Heart right ventricle (tissue), 16 donors: ENCODE measurements at regions of chr16 and their contacts with region 1.

Region 1: GRCh38 chr16:58392215-58393137 is at the start of gene GINS3:
- DNase-seq: peak; percentile 85 to 95
- ATAC-seq: peak; percentile 97 to 99 (median 98)
- H3K4me3 ChIP-seq: peak within 1 kb of the TSS; percentile 61 to 100 (median 78)
- H3K27ac ChIP-seq: peak within 1 kb of the TSS; percentile 44 to 89 (median 84)
- H3K4me1 ChIP-seq: peaks cover 0 to 20% (median 12%) of the 10 kb centered on the region in 9 donors
- H3K27me3 ChIP-seq: peaks cover 0 to 4% (median 0%) of the 10 kb centered on the region in 7 donors
- CTCF ChIP-seq: peak in 2 of 9 donors; percentile 7 to 10
- total RNA-seq, gene GINS3: 4.0 to 8.8 (median 5.5) TPM

Region 2: DNA sequence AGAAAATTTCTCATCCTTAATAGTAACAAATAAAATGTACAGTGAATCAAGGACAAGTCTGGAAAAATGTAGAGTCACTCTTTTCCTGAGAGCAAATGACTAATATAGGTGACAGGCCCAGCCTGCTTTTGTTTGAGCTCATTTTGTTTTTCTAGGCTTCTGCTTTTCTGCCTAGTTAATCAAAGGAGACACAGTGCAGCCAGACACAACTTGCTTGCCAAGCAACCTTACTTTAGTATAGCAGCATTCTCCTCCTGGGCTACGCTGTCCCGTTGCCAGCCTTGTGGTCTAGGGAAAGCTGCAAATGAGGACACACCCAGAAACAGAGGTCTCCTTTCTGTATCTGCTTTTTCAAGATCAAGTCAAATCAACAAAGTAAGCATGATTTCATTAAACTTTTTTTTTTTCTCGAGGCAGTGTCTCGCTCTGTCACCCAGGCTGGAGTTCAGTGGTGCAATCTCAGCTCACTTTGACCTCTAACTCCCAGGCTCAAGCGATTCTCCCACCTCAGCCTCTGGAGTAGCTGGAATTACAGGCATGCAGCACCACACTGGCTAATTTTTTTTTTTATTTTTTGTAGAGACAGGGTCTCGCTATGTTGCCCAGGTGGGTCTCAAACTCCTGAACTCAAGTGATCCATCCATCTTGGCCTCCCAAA is 17.0 kb after region 1 on chr16:
- intact Hi-C with region 1: loop called in 1 of 10 experiments (anchors 1 kb)
- DNase-seq: peak; percentile 42 to 61
- ATAC-seq: peak; percentile 44 to 78 (median 72)
- H3K4me3 ChIP-seq: no peak overlapping the region
- H3K27ac ChIP-seq: peak overlapping the region; percentile 14 to 95 (median 78)
- H3K4me1 ChIP-seq: peaks cover 6 to 52% (median 18%) of the 10 kb centered on the region in 9 donors
- H3K27me3 ChIP-seq: no peaks in the 10 kb centered on the region
- CTCF ChIP-seq: no peak

Region 3: GRCh38 chr16:58487566-58488351 is 95.3 kb after region 1 on chr16:
- intact Hi-C with region 1: loop called in 2 of 10 experiments (anchors 5 kb)
- DNase-seq: peak; percentile 89 to 91
- ATAC-seq: peak; percentile 75 to 88 (median 84)
- H3K4me3 ChIP-seq: peak overlapping the region in 6 of 10 donors; percentile 20 to 33 (median 24)
- H3K27ac ChIP-seq: peak overlapping the region in 9 of 10 donors; percentile 29 to 79 (median 73)
- H3K4me1 ChIP-seq: peaks cover 5 to 63% (median 42%) of the 10 kb centered on the region in 9 donors
- H3K27me3 ChIP-seq: no peaks in the 10 kb centered on the region
- CTCF ChIP-seq: peak; percentile 91 to 99 (median 95)